Prostate gland (tissue), 2 donors: ENCODE measurements at regions of chrX and their contacts with region 1.

Region 1: GRCh38 chrX:41116948-41117347 is 31.7 kb downstream of the USP9X start:
- DNase-seq: no peak
- H3K4me3 ChIP-seq: no peak overlapping the region
- H3K27ac ChIP-seq: no peak overlapping the region
- H3K4me1 ChIP-seq: no peaks in the 10 kb centered on the region
- H3K27me3 ChIP-seq: no peaks in the 10 kb centered on the region
- CTCF ChIP-seq: no peak
- POLR2A ChIP-seq: no peak

Region 2: GRCh38 chrX:40792433-40792832 is 324.5 kb before region 1 on chrX:
- intact Hi-C with region 1: loop called (anchors 10 kb)
- DNase-seq: no peak
- H3K4me3 ChIP-seq: no peak overlapping the region
- H3K27ac ChIP-seq: no peak overlapping the region
- H3K4me1 ChIP-seq: no peaks in the 10 kb centered on the region
- H3K27me3 ChIP-seq: no peaks in the 10 kb centered on the region
- CTCF ChIP-seq: no peak
- POLR2A ChIP-seq: no peak